Vagina (tissue), 2 donors: ENCODE measurements at regions of chr19 and their contacts with region 1.

Region 1: GRCh38 chr19:7177926-7178325 is 108.4 kb downstream of the ZNF557 start:
- DNase-seq: no peak
- H3K4me3 ChIP-seq: no peak overlapping the region
- H3K27ac ChIP-seq: peak overlapping the region; percentile 5
- H3K4me1 ChIP-seq: peaks cover 45% of the 10 kb centered on the region
- H3K27me3 ChIP-seq: no peaks in the 10 kb centered on the region
- CTCF ChIP-seq: no peak
- POLR2A ChIP-seq: no peak

Region 2: DNA sequence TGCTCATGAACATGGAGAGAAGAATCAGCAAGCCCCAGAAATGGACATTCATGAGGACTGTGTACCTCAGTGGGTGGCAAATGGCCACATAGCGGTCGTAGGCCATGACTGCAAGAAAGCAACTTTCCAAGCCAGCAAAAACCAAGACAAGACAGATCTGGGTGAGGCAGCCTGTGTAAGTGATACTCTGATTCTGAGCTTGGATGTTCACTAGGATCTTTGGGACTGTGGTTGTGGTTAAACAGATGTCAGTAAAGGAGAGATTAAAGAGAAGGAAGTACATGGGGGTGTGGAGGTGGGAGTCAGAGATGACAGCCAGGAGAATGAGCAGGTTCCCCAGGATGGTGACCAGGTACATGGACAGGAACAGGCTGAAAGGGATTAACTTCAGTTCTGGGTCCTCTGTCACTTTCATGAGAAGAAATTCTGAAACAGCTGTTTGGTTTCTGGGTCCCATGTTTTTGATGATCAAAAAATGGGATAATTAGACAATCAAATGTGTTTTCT is 1937.4 kb after region 1 on chr19 and contains the start of gene OR7G1:
- intact Hi-C with region 1: loop called (anchors 5 kb)
- DNase-seq: no peak
- H3K4me3 ChIP-seq: no peak within 1 kb of the TSS
- H3K27ac ChIP-seq: no peak within 1 kb of the TSS
- H3K4me1 ChIP-seq: no peaks in the 10 kb centered on the region
- H3K27me3 ChIP-seq: no peaks in the 10 kb centered on the region
- CTCF ChIP-seq: no peak
- POLR2A ChIP-seq: no peak
- total RNA-seq, gene OR7G1: not detected